Activated CD8-positive, alpha-beta memory T cell treated with anti-CD3 and anti-CD28 coated beads, Interleukin-2, amount 10 ng/mL, durations not matched to agents 7 days and 5 days (primary cell): ENCODE measurements at regions of chr19 and their contacts with region 1.

Region 1: DNA sequence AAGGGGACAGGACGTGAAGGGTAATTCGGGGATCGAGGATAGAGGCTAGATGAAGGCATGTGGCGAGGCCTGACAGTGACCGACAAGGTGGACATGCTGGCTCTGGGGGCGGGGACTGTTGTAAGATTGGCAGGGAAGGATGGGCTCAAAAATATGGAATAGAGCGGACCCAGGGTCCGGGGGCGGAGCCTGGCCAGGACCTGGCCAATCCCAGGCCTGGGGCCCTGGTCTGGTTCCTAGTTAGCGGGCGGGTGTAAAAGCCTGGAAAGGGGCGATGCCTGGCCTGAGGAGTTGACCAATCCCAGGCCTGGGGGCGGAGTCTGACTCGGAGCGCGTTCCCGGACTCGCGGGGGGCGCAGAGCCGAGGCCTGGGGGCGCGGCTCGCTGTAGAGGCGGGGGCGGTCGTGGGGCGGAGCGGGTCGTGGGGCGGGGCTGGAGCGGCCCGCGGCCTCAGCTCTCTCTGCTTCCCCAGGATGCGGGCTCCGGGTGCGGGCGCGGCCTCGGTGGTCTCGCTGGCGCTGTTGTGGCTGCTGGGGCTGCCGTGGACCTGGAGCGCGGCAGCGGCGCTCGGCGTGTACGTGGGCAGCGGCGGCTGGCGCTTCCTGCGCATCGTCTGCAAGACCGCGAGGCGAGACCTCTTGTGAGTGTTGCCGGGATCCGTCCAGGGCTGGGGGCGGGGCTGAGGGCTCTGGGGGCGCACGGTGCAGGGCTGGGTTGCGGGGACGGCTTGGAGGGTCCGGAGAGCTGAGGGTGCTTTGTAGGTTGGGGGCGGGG is at the start of gene SLC27A1:
- DNase-seq: peak; percentile 94
- ATAC-seq: peak; percentile 90
- H3K4me3 Mint-ChIP-seq: peak within 1 kb of the TSS; percentile 90
- H3K27ac Mint-ChIP-seq: peak within 1 kb of the TSS; percentile 88
- H3K4me1 Mint-ChIP-seq: peaks cover 29% of the 10 kb centered on the region
- H3K27me3 Mint-ChIP-seq: peaks cover 11% of the 10 kb centered on the region
- total RNA-seq, gene SLC27A1: 1.5 to 2.1 TPM

Region 2: GRCh38 chr19:17441241-17442021 is 28.8 kb before region 1 on chr19:
- CTCF ChIA-PET with region 1: interaction called, 28 read pairs
- DNase-seq: peak; percentile 46
- ATAC-seq: peak; percentile 51
- H3K4me3 Mint-ChIP-seq: no peak overlapping the region
- H3K27ac Mint-ChIP-seq: no peak overlapping the region
- H3K4me1 Mint-ChIP-seq: no peaks in the 10 kb centered on the region
- H3K27me3 Mint-ChIP-seq: no peaks in the 10 kb centered on the region